ENCODE measurements at regions of chr1 and their contacts with region 1.

Region 1: DNA sequence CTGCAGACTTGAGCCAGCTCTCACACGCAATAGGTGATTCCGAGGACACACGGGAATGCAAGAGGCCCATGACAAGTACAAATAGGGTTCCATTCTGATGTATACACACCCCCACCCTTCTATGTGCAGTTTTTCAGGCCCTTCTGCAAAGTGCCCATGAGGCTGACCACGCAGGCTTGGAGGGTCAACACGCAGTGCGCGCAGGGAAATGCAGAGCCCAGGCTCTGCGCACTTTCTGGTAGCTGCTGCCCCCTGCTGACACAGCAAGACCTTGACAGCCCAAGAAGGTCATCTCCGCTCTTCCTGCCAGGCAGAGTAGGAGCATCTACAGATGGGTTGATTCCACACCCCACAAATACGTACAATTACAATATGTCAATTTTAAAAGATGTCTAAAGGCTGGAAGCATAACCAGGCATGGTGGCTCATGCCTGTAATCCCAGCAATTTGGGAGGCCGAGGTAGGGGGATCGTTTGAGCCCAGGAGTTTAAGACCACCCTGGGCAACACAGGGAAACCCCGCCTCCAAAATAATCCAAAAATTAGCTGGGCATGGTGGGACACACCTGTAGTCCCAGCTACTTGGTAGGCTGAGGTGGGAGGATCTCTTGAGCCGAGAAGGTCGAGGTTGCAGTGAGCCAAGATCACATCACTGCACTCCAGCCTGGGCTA is 18.5 kb downstream of the SH3BP5L start:
- DNase-seq: peak; percentile 29 to 53
- H3K4me3 ChIP-seq: no peak overlapping the region
- H3K27ac ChIP-seq: no peak overlapping the region
- H3K4me1 ChIP-seq: peaks cover 0 to 6% of the 10 kb centered on the region in 2 donors
- H3K27me3 ChIP-seq: no peaks in the 10 kb centered on the region
- CTCF ChIP-seq: peak; percentile 39 to 79 (median 56)
- POLR2A ChIP-seq: no peak

Region 2: GRCh38 chr1:248288391-248288790 is 518.8 kb before region 1 on chr1:
- intact Hi-C with region 1: no loop called
- DNase-seq: no peak
- H3K4me3 ChIP-seq: no peak overlapping the region
- H3K27ac ChIP-seq: no peak overlapping the region
- H3K4me1 ChIP-seq: no peaks in the 10 kb centered on the region
- H3K27me3 ChIP-seq: no peaks in the 10 kb centered on the region
- CTCF ChIP-seq: no peak
- POLR2A ChIP-seq: no peak

Region 3: GRCh38 chr1:248471154-248471553 is 336.0 kb before region 1 on chr1:
- intact Hi-C with region 1: no loop called
- DNase-seq: no peak
- H3K4me3 ChIP-seq: no peak overlapping the region
- H3K27ac ChIP-seq: no peak overlapping the region
- H3K4me1 ChIP-seq: no peaks in the 10 kb centered on the region
- H3K27me3 ChIP-seq: no peaks in the 10 kb centered on the region
- CTCF ChIP-seq: no peak
- POLR2A ChIP-seq: no peak

Region 4: DNA sequence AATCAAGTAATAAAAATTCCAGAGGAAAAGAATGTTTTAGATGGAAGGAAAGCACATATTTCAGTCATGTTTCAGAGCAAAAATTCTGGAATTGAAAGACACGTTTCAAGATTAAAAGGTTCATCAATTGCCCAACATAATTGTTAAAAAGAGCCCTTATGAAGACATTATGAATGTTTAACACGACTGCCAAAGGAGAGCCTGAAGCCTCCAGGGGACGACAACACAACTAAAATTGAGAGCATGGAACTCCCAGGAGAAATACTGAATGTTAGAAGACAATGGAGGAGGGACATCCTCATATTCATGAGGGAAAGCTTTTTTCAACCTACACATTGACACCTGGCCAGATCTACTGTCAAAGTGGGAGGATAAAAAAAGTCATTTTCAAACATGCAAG is 188.3 kb before region 1 on chr1:
- intact Hi-C with region 1: loop called (anchors 5 kb)
- DNase-seq: peak; percentile 39 to 74
- H3K4me3 ChIP-seq: no peak overlapping the region
- H3K27ac ChIP-seq: no peak overlapping the region
- H3K4me1 ChIP-seq: no peaks in the 10 kb centered on the region
- H3K27me3 ChIP-seq: no peaks in the 10 kb centered on the region
- CTCF ChIP-seq: peak in 5 of 6 experiments; percentile 25 to 71 (median 43)
- POLR2A ChIP-seq: no peak

Measured in thyroid gland (tissue), 4 donors.